CD8-positive, alpha-beta memory T cell (primary cell): ENCODE measurements at regions of chr3 and their contacts with region 1.

Region 1: GRCh38 chr3:98540346-98540745 is 8.6 kb downstream of the GPR15 start:
- DNase-seq: no peak
- H3K4me3 ChIP-seq: no peak overlapping the region
- H3K4me3 Mint-ChIP-seq: peak overlapping the region in 6 of 7 donors; percentile 17 to 74 (median 49)
- H3K27ac ChIP-seq: no peak overlapping the region
- H3K27ac Mint-ChIP-seq: peak overlapping the region; percentile 17 to 91 (median 74)
- H3K4me1 ChIP-seq: no peaks in the 10 kb centered on the region
- H3K4me1 Mint-ChIP-seq: peaks cover 20 to 68% (median 67%) of the 10 kb centered on the region in 3 donors
- H3K27me3 ChIP-seq: no peaks in the 10 kb centered on the region
- H3K27me3 Mint-ChIP-seq: no peaks in the 10 kb centered on the region

Region 2: GRCh38 chr3:98556164-98557130 is 16.1 kb after region 1 on chr3:
- CTCF ChIA-PET with region 1: interaction called, 4 read pairs
- POLR2A ChIA-PET with region 1: interaction called, 11 read pairs
- DNase-seq: peak in 3 of 5 donors; percentile 6 to 90 (median 13)
- H3K4me3 ChIP-seq: peak overlapping the region; percentile 24
- H3K4me3 Mint-ChIP-seq: peak overlapping the region; percentile 52 to 80 (median 69)
- H3K27ac ChIP-seq: peak overlapping the region; percentile 52
- H3K27ac Mint-ChIP-seq: peak overlapping the region; percentile 72 to 97 (median 94)
- H3K4me1 ChIP-seq: peaks cover 63% of the 10 kb centered on the region
- H3K4me1 Mint-ChIP-seq: peaks cover 77 to 98% (median 94%) of the 10 kb centered on the region in 3 donors
- H3K27me3 ChIP-seq: no peaks in the 10 kb centered on the region
- H3K27me3 Mint-ChIP-seq: no peaks in the 10 kb centered on the region

Region 3: GRCh38 chr3:98563661-98564281 is 23.4 kb after region 1 on chr3:
- CTCF ChIA-PET with region 1: interaction called, 3 read pairs
- POLR2A ChIA-PET with region 1: interaction called, 21 read pairs
- DNase-seq: peak in 4 of 5 donors; percentile 18 to 77 (median 66)
- H3K4me3 ChIP-seq: no peak overlapping the region
- H3K4me3 Mint-ChIP-seq: peak overlapping the region; percentile 61 to 86 (median 80)
- H3K27ac ChIP-seq: peak overlapping the region; percentile 77
- H3K27ac Mint-ChIP-seq: peak overlapping the region; percentile 93 to 99 (median 97)
- H3K4me1 ChIP-seq: peaks cover 72% of the 10 kb centered on the region
- H3K4me1 Mint-ChIP-seq: peaks cover 77 to 98% (median 95%) of the 10 kb centered on the region in 3 donors
- H3K27me3 ChIP-seq: no peaks in the 10 kb centered on the region
- H3K27me3 Mint-ChIP-seq: peaks cover 0 to 2% of the 10 kb centered on the region in 2 donors

Region 4: GRCh38 chr3:98788651-98789050 is 248.3 kb after region 1 on chr3:
- CTCF ChIA-PET with region 1: no interaction called
- POLR2A ChIA-PET with region 1: no interaction called
- DNase-seq: no peak
- H3K4me3 ChIP-seq: no peak overlapping the region
- H3K4me3 Mint-ChIP-seq: no peak overlapping the region
- H3K27ac ChIP-seq: no peak overlapping the region
- H3K27ac Mint-ChIP-seq: no peak overlapping the region
- H3K4me1 ChIP-seq: no peaks in the 10 kb centered on the region
- H3K4me1 Mint-ChIP-seq: no peaks in the 10 kb centered on the region
- H3K27me3 ChIP-seq: no peaks in the 10 kb centered on the region
- H3K27me3 Mint-ChIP-seq: peaks cover 3 to 51% of the 10 kb centered on the region in 2 donors